CD8-positive, alpha-beta T cell (primary cell): ENCODE measurements at regions of chr21 and their contacts with region 1.

Region 1: DNA sequence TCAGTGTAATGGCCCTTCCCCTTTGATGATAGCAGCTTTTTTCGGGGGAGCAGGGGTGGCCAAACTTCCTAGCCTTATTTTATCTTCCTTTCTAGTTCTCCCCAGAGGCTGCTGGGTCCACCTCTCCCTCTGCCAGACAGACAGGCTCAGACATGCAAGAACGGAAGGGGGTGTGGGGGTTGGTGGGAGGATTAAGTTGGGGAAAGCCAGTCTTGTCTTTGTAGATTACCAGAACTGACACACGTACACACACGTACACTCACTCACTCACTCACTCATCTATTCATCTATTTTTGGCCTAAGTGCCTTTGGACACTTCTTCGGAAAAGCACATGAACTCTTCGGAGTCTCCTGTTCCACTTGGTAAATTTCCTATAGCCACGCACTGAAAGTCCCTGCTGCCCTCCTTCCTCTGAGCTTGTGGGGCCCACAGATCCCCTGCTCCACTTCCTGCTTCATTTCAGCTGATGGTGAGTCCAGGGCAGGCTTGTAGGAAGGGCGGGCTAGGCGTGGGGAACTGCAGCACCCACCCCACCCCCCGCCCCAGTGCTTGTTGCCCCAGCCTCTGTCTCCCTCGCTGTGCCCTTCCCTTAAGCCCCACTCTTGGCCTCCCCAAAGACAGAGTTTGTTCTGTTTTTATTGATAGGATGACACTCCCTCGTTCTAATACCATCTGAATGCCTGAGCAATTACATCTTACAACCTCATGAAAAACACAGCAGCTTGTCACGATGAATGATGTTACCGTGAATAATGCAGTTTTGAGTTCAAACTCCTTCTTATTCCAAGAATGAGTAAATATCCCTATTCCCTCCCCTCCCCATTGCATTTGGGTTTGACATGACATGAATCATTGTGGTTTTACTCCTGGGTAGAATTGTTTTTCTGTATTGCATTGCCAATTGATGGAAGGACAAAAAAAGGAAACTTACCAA is 60.7 kb upstream of the ATP5PO start:
- DNase-seq: peak; percentile 14 to 79 (median 61)
- ATAC-seq: peak; percentile 61
- H3K4me3 ChIP-seq: no peak overlapping the region
- H3K4me3 Mint-ChIP-seq: peak overlapping the region; percentile 66
- H3K27ac ChIP-seq: peak overlapping the region; percentile 47 to 80
- H3K27ac Mint-ChIP-seq: peak overlapping the region; percentile 92
- H3K4me1 ChIP-seq: peaks cover 29% of the 10 kb centered on the region
- H3K4me1 Mint-ChIP-seq: peaks cover 48% of the 10 kb centered on the region
- H3K27me3 ChIP-seq: no peaks in the 10 kb centered on the region
- H3K27me3 Mint-ChIP-seq: no peaks in the 10 kb centered on the region
- CTCF ChIP-seq: no peak

Region 2: GRCh38 chr21:33931799-33932390 is 44.5 kb before region 1 on chr21:
- CTCF ChIA-PET with region 1: no interaction called
- POLR2A ChIA-PET with region 1: interaction called, 5 read pairs
- intact Hi-C with region 1: loop called in 1 of 2 experiments (anchors 5 kb)
- DNase-seq: peak in 2 of 9 experiments; percentile 27 to 34
- ATAC-seq: peak; percentile 26
- H3K4me3 ChIP-seq: peak overlapping the region; percentile 70 to 85
- H3K4me3 Mint-ChIP-seq: peak overlapping the region; percentile 94
- H3K27ac ChIP-seq: peak overlapping the region; percentile 85 to 90
- H3K27ac Mint-ChIP-seq: peak overlapping the region; percentile 99
- H3K4me1 ChIP-seq: peaks cover 42% of the 10 kb centered on the region
- H3K4me1 Mint-ChIP-seq: peaks cover 46% of the 10 kb centered on the region
- H3K27me3 ChIP-seq: no peaks in the 10 kb centered on the region
- H3K27me3 Mint-ChIP-seq: no peaks in the 10 kb centered on the region
- CTCF ChIP-seq: no peak

Region 3: GRCh38 chr21:33947451-33948095 is 28.8 kb before region 1 on chr21:
- CTCF ChIA-PET with region 1: no interaction called
- POLR2A ChIA-PET with region 1: interaction called, 22 read pairs
- intact Hi-C with region 1: loop called (anchors 1 kb)
- DNase-seq: peak; percentile 64 to 97 (median 82)
- ATAC-seq: peak; percentile 56
- H3K4me3 ChIP-seq: peak overlapping the region; percentile 18 to 25
- H3K4me3 Mint-ChIP-seq: peak overlapping the region; percentile 75
- H3K27ac ChIP-seq: peak overlapping the region; percentile 94 to 95
- H3K27ac Mint-ChIP-seq: peak overlapping the region; percentile 99
- H3K4me1 ChIP-seq: peaks cover 66% of the 10 kb centered on the region
- H3K4me1 Mint-ChIP-seq: peaks cover 78% of the 10 kb centered on the region
- H3K27me3 ChIP-seq: no peaks in the 10 kb centered on the region
- H3K27me3 Mint-ChIP-seq: no peaks in the 10 kb centered on the region
- CTCF ChIP-seq: no peak

Region 4: DNA sequence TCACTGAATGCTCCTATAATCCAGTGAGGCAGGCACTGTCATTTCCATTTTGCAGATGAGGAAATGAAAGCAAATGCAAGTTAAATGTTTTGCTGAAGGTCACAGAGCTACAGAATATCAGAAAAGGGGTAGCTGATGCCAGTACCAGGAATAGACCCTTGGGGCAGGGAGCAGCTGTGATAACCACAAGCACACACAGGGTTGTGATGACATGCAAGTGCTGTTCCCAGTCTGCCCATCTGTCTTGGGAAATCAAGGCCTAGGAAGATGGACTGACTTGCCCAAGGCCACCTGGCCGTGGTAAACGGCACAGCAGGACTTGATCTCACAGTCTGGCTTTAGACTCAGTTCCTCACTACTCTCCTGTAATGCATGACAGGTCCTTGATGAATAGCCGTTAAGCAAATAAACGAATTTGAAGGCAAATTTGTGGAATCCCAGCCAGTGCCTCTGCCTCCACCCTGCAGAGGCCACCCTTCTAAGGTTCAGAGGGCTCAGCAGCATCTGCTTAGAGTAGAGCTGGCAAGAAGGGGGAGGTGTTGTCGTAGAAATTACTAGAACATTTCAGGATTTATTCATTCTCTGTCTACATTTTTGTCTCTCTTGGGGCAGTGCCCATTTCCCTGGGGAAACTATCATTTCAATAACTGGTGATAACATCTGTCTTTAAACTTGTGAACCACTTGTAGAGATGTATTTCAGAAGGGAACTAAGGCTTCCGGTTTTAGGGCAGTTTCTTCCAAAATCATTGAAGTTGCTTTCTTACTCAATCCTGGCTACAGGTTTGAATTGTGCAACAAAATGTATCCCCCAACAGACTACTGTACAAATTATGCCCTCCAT is 43.9 kb after region 1 on chr21:
- CTCF ChIA-PET with region 1: no interaction called
- POLR2A ChIA-PET with region 1: no interaction called
- intact Hi-C with region 1: loop called in 1 of 2 experiments (anchors 5 kb)
- DNase-seq: no peak
- ATAC-seq: no peak
- H3K4me3 ChIP-seq: no peak overlapping the region
- H3K4me3 Mint-ChIP-seq: no peak overlapping the region
- H3K27ac ChIP-seq: no peak overlapping the region
- H3K27ac Mint-ChIP-seq: no peak overlapping the region
- H3K4me1 ChIP-seq: peaks cover 36% of the 10 kb centered on the region
- H3K4me1 Mint-ChIP-seq: peaks cover 25% of the 10 kb centered on the region
- H3K27me3 ChIP-seq: no peaks in the 10 kb centered on the region
- H3K27me3 Mint-ChIP-seq: no peaks in the 10 kb centered on the region
- CTCF ChIP-seq: no peak

Region 5: DNA sequence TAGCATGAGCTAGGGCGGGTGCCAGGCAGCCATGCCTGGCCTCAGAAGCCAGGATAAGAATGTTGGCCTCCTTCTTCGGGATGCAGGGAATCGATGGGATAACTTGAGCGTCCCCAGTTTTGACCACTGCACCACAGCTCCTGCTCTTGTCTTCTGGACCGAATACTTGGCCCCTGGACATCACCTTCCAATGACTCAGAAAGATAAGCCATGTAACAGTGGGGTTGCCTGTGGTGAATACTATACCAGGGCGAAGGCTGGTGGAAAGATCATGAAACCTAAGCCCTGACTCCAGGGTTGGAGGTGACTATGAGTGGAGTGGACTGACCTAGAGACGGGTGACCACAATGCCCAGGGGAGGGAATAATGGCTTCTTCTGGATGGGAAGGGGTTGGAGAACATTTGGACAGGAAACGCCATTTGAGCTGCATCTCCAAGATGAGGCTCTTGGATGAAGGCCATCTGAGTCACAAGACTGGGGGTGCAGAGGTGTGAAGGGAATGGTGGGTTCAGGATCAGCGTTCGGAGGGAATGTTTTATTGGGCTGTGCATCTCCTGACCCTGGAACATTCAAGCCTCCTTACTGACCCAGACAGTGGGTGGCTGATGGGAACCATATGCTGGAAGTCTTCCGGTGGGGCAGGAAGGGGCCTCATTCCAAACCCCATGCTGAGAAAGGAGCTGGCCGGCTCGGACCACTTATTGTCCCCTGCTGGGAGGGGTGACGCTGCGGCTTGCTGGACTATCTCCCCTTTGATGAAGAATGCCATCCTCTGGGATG is 368.9 kb after region 1 on chr21:
- CTCF ChIA-PET with region 1: no interaction called
- POLR2A ChIA-PET with region 1: no interaction called
- intact Hi-C with region 1: loop called in 1 of 2 experiments (anchors 5 kb)
- DNase-seq: no peak
- ATAC-seq: no peak
- H3K4me3 ChIP-seq: no peak overlapping the region
- H3K4me3 Mint-ChIP-seq: no peak overlapping the region
- H3K27ac ChIP-seq: no peak overlapping the region
- H3K27ac Mint-ChIP-seq: no peak overlapping the region
- H3K4me1 ChIP-seq: no peaks in the 10 kb centered on the region
- H3K4me1 Mint-ChIP-seq: peaks cover 5% of the 10 kb centered on the region
- H3K27me3 ChIP-seq: no peaks in the 10 kb centered on the region
- H3K27me3 Mint-ChIP-seq: no peaks in the 10 kb centered on the region
- CTCF ChIP-seq: no peak

Region 6: GRCh38 chr21:34888569-34889319 is 912.4 kb after region 1 on chr21:
- CTCF ChIA-PET with region 1: no interaction called
- POLR2A ChIA-PET with region 1: no interaction called
- intact Hi-C with region 1: no loop called
- DNase-seq: peak; percentile 33 to 88 (median 70)
- ATAC-seq: peak; percentile 28
- H3K4me3 ChIP-seq: peak overlapping the region; percentile 72 to 77
- H3K4me3 Mint-ChIP-seq: peak overlapping the region; percentile 90
- H3K27ac ChIP-seq: peak overlapping the region; percentile 58 to 78
- H3K27ac Mint-ChIP-seq: peak overlapping the region; percentile 94
- H3K4me1 ChIP-seq: peaks cover 34% of the 10 kb centered on the region
- H3K4me1 Mint-ChIP-seq: peaks cover 51% of the 10 kb centered on the region
- H3K27me3 ChIP-seq: no peaks in the 10 kb centered on the region
- H3K27me3 Mint-ChIP-seq: no peaks in the 10 kb centered on the region
- CTCF ChIP-seq: no peak